PC-9 (cell line): ENCODE measurements at regions of chr11 and their contacts with region 1.

Region 1: GRCh38 chr11:104772806-104773241 is 125.4 kb downstream of the CASP12 start:
- DNase-seq: peak in 1 of 2 experiments; percentile 82
- H3K4me3 ChIP-seq: no peak overlapping the region
- H3K27ac ChIP-seq: no peak overlapping the region
- H3K4me1 ChIP-seq: peaks cover 27% of the 10 kb centered on the region
- H3K27me3 ChIP-seq: no peaks in the 10 kb centered on the region
- CTCF ChIP-seq: no peak

Region 2: DNA sequence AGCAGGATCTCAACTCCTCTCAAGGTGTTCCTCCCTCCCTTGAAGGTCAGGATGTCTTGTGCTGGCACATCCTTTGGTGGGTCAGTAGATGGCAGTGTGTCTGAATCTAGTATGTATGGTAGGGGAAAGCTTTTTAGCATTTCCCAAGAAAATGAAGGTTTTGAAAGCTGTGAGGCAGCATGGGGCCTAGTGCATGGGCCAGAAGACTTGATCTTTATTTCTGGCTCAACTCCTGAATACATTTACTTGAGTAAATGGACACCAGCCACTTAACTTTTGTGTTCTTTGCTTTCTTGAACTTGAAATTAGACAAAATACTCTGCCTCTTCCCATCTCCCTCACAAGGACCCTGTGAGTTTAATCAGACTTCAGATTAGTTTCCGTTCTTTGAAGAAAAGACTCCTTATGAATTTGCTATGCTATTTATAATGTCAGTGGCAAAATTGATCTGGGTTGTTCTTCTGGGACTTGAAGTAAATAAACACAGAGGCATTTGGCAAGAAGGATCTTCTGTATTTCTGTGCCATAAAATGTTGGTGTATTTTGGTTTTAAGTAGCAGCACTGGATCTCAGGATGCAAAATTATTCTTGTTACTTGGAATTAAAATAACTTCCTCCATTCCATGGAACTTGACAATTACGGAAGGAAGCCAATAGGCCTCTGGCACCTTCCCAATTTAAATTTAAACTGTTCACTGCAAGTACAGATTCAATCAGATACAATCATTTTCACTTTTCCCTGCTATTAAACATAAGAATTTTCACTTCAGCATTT is 163.3 kb before region 1 on chr11:
- CTCF ChIA-PET with region 1: no interaction called
- POLR2A ChIA-PET with region 1: no interaction called
- intact Hi-C with region 1: no loop called
- DNase-seq: peak in 1 of 2 experiments; percentile 1
- H3K4me3 ChIP-seq: no peak overlapping the region
- H3K27ac ChIP-seq: no peak overlapping the region
- H3K4me1 ChIP-seq: no peaks in the 10 kb centered on the region
- H3K27me3 ChIP-seq: no peaks in the 10 kb centered on the region
- CTCF ChIP-seq: peak; percentile 72

Region 3: GRCh38 chr11:104668797-104669463 is 103.9 kb before region 1 on chr11:
- CTCF ChIA-PET with region 1: no interaction called
- POLR2A ChIA-PET with region 1: no interaction called
- intact Hi-C with region 1: loop called (anchors 5 kb)
- DNase-seq: peak; percentile 1 to 91
- H3K4me3 ChIP-seq: no peak overlapping the region
- H3K27ac ChIP-seq: no peak overlapping the region
- H3K4me1 ChIP-seq: peaks cover 15% of the 10 kb centered on the region
- H3K27me3 ChIP-seq: no peaks in the 10 kb centered on the region
- CTCF ChIP-seq: no peak

Region 4: DNA sequence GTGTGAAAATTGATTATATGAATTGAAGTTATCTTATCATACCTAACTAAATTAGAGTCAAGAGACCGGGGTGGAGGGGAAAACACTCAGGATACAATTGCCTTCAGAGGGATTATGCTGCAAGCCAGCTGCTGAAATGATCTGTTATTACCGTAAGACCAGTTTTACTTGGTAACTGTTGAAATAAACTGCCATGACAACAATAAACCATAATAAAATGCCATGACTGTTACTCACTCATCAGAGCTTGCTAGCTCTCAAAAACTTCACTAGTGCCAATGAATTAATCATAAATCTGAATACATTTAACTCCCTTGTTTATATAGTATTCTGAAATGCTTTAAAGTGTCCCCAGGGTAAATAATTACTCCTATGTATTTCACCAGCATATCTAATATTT is 57.3 kb after region 1 on chr11:
- CTCF ChIA-PET with region 1: no interaction called
- POLR2A ChIA-PET with region 1: no interaction called
- intact Hi-C with region 1: loop called (anchors 2 kb)
- DNase-seq: peak; percentile 4 to 92
- H3K4me3 ChIP-seq: no peak overlapping the region
- H3K27ac ChIP-seq: no peak overlapping the region
- H3K4me1 ChIP-seq: 0 out of 2 replicates have a peak, but pooled peaks cover 6% of the 10 kb centered on the region
- H3K27me3 ChIP-seq: no peaks in the 10 kb centered on the region
- CTCF ChIP-seq: no peak